Activated CD4-positive, alpha-beta T cell treated with anti-CD3 and anti-CD28 coated beads for 36 hours (primary cell): ENCODE measurements at regions of chr5 and their contacts with region 1.

Region 1: GRCh38 chr5:144191998-144192397 is 21.3 kb downstream of the KCTD16 start:
- DNase-seq: peak; percentile 19
- ATAC-seq: peak; percentile 74
- H3K4me3 Mint-ChIP-seq: no peak overlapping the region
- H3K27ac Mint-ChIP-seq: no peak overlapping the region
- H3K4me1 Mint-ChIP-seq: peaks cover 22% of the 10 kb centered on the region
- H3K27me3 Mint-ChIP-seq: no peaks in the 10 kb centered on the region

Region 2: GRCh38 chr5:142922223-142922952 is 1269.6 kb before region 1 on chr5:
- CTCF ChIA-PET with region 1: no interaction called
- POLR2A ChIA-PET with region 1: no interaction called
- intact Hi-C with region 1: loop called in 1 of 2 experiments (anchors 5 kb)
- DNase-seq: no peak
- ATAC-seq: no peak
- H3K4me3 Mint-ChIP-seq: no peak overlapping the region
- H3K27ac Mint-ChIP-seq: no peak overlapping the region
- H3K4me1 Mint-ChIP-seq: peaks cover 23% of the 10 kb centered on the region
- H3K27me3 Mint-ChIP-seq: no peaks in the 10 kb centered on the region

Region 3: DNA sequence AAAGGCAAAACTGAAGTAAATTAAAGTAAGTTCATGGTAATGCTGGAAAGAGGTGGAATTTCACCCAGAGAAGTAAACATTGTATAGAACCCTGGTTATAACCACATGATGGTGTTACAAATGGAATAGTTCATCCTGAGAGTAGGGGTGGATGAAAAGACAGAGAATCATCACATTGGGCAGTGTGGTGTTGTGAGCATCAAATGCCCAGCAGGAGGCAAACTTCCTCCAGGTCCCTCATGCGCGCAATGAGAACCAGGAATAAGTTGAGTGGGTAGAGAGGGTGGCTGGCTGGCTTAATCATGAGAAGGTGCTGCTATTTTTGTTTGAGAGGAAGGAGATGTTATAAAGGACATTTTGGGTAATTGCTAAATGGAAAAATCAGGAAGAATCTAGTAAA is 543.3 kb before region 1 on chr5:
- CTCF ChIA-PET with region 1: no interaction called
- POLR2A ChIA-PET with region 1: no interaction called
- intact Hi-C with region 1: loop called in 1 of 2 experiments (anchors 2 kb)
- DNase-seq: peak; percentile 26
- ATAC-seq: no peak
- H3K4me3 Mint-ChIP-seq: no peak overlapping the region
- H3K27ac Mint-ChIP-seq: no peak overlapping the region
- H3K4me1 Mint-ChIP-seq: peaks cover 17% of the 10 kb centered on the region
- H3K27me3 Mint-ChIP-seq: no peaks in the 10 kb centered on the region

Region 4: GRCh38 chr5:144203750-144204596 is 12.0 kb after region 1 on chr5:
- CTCF ChIA-PET with region 1: interaction called, 16 read pairs
- POLR2A ChIA-PET with region 1: interaction called, 3 read pairs
- intact Hi-C with region 1: no loop called
- DNase-seq: peak; percentile 44
- ATAC-seq: peak; percentile 61
- H3K4me3 Mint-ChIP-seq: no peak overlapping the region
- H3K27ac Mint-ChIP-seq: no peak overlapping the region
- H3K4me1 Mint-ChIP-seq: peaks cover 17% of the 10 kb centered on the region
- H3K27me3 Mint-ChIP-seq: peaks cover 44% of the 10 kb centered on the region

Region 5: GRCh38 chr5:144254552-144254951 is 62.6 kb after region 1 on chr5:
- CTCF ChIA-PET with region 1: no interaction called
- POLR2A ChIA-PET with region 1: no interaction called
- intact Hi-C with region 1: no loop called
- DNase-seq: no peak
- ATAC-seq: no peak
- H3K4me3 Mint-ChIP-seq: no peak overlapping the region
- H3K27ac Mint-ChIP-seq: no peak overlapping the region
- H3K4me1 Mint-ChIP-seq: no peaks in the 10 kb centered on the region
- H3K27me3 Mint-ChIP-seq: peaks cover 11% of the 10 kb centered on the region